ENCODE measurements at regions of chr22 and their contacts with region 1.

Region 1: DNA sequence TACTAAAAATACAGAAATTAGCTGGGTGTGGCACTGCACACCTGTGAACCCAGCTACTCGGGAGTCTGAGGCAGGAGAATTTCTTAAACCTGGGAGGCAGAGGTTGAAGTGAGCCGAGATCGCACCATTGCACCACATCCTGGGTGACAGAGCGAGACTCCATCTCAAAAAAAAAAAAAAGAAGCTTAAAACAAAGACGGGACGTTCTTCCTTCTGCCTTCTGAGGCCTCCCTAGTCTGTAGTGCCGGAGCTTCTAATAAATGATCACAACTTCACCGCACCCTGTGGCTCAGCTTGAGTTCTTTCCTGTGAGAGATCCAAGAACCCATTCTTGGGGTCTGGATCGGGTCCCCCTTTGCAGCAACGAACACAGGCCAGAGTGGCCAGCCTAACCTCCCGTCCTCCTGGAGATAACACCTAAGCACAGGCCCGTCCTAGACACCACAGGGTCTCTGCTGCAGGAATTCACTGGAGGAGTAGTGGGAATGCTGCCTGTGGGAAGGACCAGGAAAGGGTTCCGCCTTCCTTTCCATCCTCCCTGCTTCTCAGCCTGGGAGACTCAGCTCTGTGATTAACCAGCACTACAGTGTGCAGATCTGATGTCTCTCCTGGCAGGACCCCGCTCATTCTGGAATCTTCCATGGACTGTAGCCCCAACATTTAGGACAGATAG is 2.2 kb upstream of the APOBEC3H start:
- DNase-seq: no peak
- H3K4me3 Mint-ChIP-seq: no peak overlapping the region
- H3K27ac Mint-ChIP-seq: no peak overlapping the region
- H3K4me1 Mint-ChIP-seq: no peaks in the 10 kb centered on the region
- H3K27me3 Mint-ChIP-seq: peaks cover 20% of the 10 kb centered on the region
- CTCF ChIP-seq: no peak

Region 2: DNA sequence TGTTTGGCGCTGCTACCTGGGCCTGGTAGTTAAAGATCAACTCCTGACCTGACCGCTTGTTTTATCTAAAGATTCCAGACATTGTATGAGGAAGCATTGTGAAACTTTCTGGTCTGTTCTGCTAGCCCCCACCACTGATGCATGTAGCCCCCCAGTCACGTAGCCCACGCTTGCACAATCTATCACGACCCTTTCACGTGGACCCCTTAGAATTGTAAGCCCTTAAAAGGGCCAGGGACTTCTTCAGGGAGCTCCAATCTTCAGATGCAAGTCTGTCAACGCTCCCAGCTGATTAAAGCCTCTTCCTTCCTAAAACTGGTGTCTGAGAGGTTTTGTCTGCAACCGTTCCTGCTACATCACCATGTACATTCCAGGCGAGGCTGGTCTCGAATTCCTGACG is 39.2 kb before region 1 on chr22:
- CTCF ChIA-PET with region 1: no interaction called
- intact Hi-C with region 1: loop called (anchors 2 kb)
- DNase-seq: peak; percentile 26
- H3K4me3 Mint-ChIP-seq: no peak overlapping the region
- H3K27ac Mint-ChIP-seq: no peak overlapping the region
- H3K4me1 Mint-ChIP-seq: no peaks in the 10 kb centered on the region
- H3K27me3 Mint-ChIP-seq: no peaks in the 10 kb centered on the region
- CTCF ChIP-seq: no peak